Activated CD4-positive, alpha-beta T cell treated with anti-CD3 and anti-CD28 coated beads for 36 hours (primary cell): ENCODE measurements at regions of chr6 and their contacts with region 1.

Region 1: GRCh38 chr6:125956506-125957390 is at the start of gene HINT3:
- DNase-seq: peak; percentile 99
- ATAC-seq: peak; percentile 89
- H3K4me3 Mint-ChIP-seq: no peak within 1 kb of the TSS
- H3K27ac Mint-ChIP-seq: peak within 1 kb of the TSS; percentile 65
- H3K4me1 Mint-ChIP-seq: peaks cover 5% of the 10 kb centered on the region
- H3K27me3 Mint-ChIP-seq: peaks cover 6% of the 10 kb centered on the region
- total RNA-seq, gene HINT3: 5.4 to 8.1 TPM

Region 2: DNA sequence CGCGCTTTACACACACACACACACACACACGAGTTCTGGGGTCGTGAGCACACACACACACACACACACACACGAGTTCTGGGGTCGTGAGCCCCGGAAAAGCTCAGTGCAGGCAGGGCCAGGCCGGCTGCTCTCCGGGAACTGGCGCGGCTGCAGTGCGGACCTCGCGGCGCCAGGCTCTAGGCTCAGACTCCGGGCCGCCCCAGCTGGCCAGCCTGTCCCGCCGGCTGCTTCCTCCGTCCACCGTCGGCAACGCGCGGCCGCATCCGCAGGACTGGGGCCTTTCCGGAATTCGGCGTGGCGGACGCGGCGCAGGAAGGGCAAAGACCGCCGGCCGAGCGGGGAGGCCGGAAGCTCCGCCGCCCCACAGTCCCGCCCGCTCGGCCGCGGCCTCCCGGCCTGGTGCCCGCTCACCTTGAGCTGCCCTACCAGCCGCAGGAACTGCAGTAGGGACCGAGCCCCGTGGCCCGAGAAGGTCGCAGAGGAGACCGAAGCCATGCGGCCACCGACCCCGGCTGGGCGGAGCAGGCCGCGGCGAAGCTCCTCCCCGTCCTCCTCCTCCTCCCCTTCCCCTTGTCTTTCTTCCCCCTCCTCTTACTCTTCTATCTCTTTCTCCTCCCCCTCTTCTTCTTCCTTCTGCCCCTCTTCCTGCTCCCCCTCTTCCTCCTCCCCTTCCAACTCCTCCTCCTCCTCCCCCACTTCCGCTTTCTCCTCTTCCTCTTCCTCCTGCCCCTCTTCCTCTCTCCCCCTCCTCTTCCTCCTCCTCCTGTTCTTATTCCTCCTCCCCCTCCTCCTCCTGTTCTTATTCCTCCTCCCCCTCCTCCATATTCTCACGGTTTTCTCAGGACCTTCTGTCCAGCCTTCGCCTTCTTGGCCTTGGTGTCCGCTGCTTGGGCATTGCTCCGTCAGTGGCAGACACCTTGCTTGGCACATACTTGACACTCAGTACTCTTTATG is 655.0 kb before region 1 on chr6 and contains the start of gene HDDC2:
- CTCF ChIA-PET with region 1: interaction called, 4 read pairs
- POLR2A ChIA-PET with region 1: no interaction called
- intact Hi-C with region 1: loop called in 1 of 2 experiments (anchors 2 kb)
- DNase-seq: peak; percentile 64
- ATAC-seq: peak; percentile 79
- H3K4me3 Mint-ChIP-seq: peak within 1 kb of the TSS; percentile 94
- H3K27ac Mint-ChIP-seq: peak within 1 kb of the TSS; percentile 98
- H3K4me1 Mint-ChIP-seq: peaks cover 46% of the 10 kb centered on the region
- H3K27me3 Mint-ChIP-seq: no peaks in the 10 kb centered on the region
- total RNA-seq, gene HDDC2: 96.7 to 120 TPM

Region 3: GRCh38 chr6:125779924-125780539 is 176.7 kb before region 1 on chr6:
- CTCF ChIA-PET with region 1: interaction called, 45 read pairs
- POLR2A ChIA-PET with region 1: interaction called, 13 read pairs
- intact Hi-C with region 1: loop called (anchors 1 kb)
- DNase-seq: peak; percentile 89
- ATAC-seq: peak; percentile 77
- H3K4me3 Mint-ChIP-seq: no peak overlapping the region
- H3K27ac Mint-ChIP-seq: no peak overlapping the region
- H3K4me1 Mint-ChIP-seq: peaks cover 20% of the 10 kb centered on the region
- H3K27me3 Mint-ChIP-seq: no peaks in the 10 kb centered on the region

Region 4: GRCh38 chr6:125888989-125889656 is 67.6 kb before region 1 on chr6:
- CTCF ChIA-PET with region 1: interaction called, 26 read pairs
- POLR2A ChIA-PET with region 1: no interaction called
- intact Hi-C with region 1: loop called in 1 of 2 experiments (anchors 1 kb)
- DNase-seq: peak; percentile 38
- ATAC-seq: no peak
- H3K4me3 Mint-ChIP-seq: no peak overlapping the region
- H3K27ac Mint-ChIP-seq: no peak overlapping the region
- H3K4me1 Mint-ChIP-seq: no peaks in the 10 kb centered on the region
- H3K27me3 Mint-ChIP-seq: no peaks in the 10 kb centered on the region

Region 5: GRCh38 chr6:125918681-125919566 is 37.8 kb before region 1 on chr6:
- CTCF ChIA-PET with region 1: interaction called, 33 read pairs
- POLR2A ChIA-PET with region 1: interaction called, 6 read pairs
- intact Hi-C with region 1: loop called (anchors 1 kb)
- DNase-seq: peak; percentile 68
- ATAC-seq: peak; percentile 96
- H3K4me3 Mint-ChIP-seq: peak overlapping the region; percentile 84
- H3K27ac Mint-ChIP-seq: peak overlapping the region; percentile 98
- H3K4me1 Mint-ChIP-seq: peaks cover 37% of the 10 kb centered on the region
- H3K27me3 Mint-ChIP-seq: no peaks in the 10 kb centered on the region

Region 6: GRCh38 chr6:126339796-126340609 is 383.3 kb after region 1 on chr6 and contains the start of gene CENPW:
- CTCF ChIA-PET with region 1: no interaction called
- POLR2A ChIA-PET with region 1: no interaction called
- intact Hi-C with region 1: loop called in 1 of 2 experiments (anchors 5 kb)
- DNase-seq: peak; percentile 97
- ATAC-seq: peak; percentile 92
- H3K4me3 Mint-ChIP-seq: no peak within 1 kb of the TSS
- H3K27ac Mint-ChIP-seq: no peak within 1 kb of the TSS
- H3K4me1 Mint-ChIP-seq: peaks cover 13% of the 10 kb centered on the region
- H3K27me3 Mint-ChIP-seq: no peaks in the 10 kb centered on the region
- total RNA-seq, gene CENPW: 44.1 to 63.6 TPM